Transverse colon (tissue), 4 donors: ENCODE measurements at regions of chr2 and their contacts with region 1.

Region 1: DNA sequence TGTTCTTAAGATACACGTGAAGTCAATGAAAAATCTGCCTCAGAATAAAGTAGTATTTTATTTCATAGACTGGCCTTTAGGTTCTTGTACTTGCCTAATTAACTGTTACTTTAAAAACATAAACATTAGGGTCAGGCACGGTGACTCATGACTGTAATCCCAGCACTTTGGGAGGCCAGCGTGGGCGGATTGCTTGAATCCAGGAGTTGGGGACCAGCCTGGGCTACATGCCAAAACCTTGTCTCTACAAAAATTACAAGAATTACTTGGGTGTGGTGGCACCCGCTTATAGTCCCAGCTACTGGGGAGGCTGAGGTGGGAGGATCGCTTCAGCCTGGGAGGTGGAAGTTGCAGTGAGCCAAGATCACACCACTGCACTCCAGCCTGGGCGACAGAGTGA is 16.0 kb upstream of the SNORC start:
- DNase-seq: peak; percentile 41
- H3K4me3 ChIP-seq: no peak overlapping the region
- H3K27ac ChIP-seq: peak overlapping the region in 2 of 4 donors; percentile 5 to 43
- H3K4me1 ChIP-seq: peaks cover 0 to 29% (median 16%) of the 10 kb centered on the region in 4 donors
- H3K27me3 ChIP-seq: no peaks in the 10 kb centered on the region
- CTCF ChIP-seq: no peak
- EP300 ChIP-seq: no peak
- POLR2A ChIP-seq: no peak

Region 2: GRCh38 chr2:233026192-233026813 is 172.2 kb after region 1 on chr2:
- in situ Hi-C with region 1: loop called in 1 of 4 experiments (anchors 25 kb)
- intact Hi-C with region 1: no loop called
- DNase-seq: no peak
- H3K4me3 ChIP-seq: no peak overlapping the region
- H3K27ac ChIP-seq: no peak overlapping the region
- H3K4me1 ChIP-seq: no peaks in the 10 kb centered on the region
- H3K27me3 ChIP-seq: no peaks in the 10 kb centered on the region
- CTCF ChIP-seq: no peak
- EP300 ChIP-seq: no peak
- POLR2A ChIP-seq: no peak

Region 3: DNA sequence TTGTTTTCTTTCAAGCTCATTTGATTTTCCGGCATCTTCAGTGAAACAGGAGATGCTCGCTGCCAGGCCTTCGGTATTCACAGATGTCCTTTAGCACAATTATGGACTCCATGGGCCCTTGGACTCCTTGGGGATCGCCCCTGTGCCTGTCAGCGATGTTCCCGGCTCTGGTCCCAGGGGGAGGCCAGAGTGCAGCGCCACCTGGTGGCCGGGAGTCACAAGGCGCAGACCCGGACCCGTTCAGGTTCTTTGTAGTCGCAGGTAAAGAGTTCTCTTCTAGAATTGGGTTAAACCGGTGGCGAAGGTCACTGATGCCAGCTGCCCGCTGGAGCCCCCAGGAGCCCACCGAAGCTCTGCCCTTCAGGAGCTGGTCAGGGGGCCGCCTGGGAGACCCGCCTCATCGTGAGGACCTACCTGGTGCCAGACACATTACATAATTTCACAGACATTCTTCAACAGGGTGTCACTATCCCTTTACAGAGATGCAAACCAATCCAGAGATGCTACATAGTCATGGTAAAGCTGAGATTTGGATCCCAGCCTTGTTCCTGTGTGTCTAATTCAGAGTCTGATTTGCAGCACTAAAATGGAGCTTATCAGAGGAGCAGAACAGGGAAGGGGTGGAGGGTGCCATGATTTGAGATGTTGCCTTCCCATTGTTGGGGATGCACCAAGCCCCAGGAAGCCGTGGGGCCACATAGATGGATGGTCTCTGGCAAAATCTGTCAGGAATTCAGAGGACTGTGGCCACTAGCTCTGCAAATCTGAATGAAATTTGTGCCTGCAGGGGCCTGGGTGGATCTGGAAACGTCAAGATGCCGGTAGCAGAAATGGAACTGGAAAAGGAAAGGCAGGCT is 200.1 kb after region 1 on chr2:
- in situ Hi-C with region 1: loop called in 2 of 4 experiments (anchors 10 to 25 kb)
- intact Hi-C with region 1: no loop called
- DNase-seq: peak; percentile 75
- H3K4me3 ChIP-seq: no peak overlapping the region
- H3K27ac ChIP-seq: no peak overlapping the region
- H3K4me1 ChIP-seq: peaks cover 0 to 6% (median 3%) of the 10 kb centered on the region in 4 donors
- H3K27me3 ChIP-seq: no peaks in the 10 kb centered on the region
- CTCF ChIP-seq: peak; percentile 88 to 94 (median 91)
- EP300 ChIP-seq: no peak
- POLR2A ChIP-seq: no peak

Region 4: DNA sequence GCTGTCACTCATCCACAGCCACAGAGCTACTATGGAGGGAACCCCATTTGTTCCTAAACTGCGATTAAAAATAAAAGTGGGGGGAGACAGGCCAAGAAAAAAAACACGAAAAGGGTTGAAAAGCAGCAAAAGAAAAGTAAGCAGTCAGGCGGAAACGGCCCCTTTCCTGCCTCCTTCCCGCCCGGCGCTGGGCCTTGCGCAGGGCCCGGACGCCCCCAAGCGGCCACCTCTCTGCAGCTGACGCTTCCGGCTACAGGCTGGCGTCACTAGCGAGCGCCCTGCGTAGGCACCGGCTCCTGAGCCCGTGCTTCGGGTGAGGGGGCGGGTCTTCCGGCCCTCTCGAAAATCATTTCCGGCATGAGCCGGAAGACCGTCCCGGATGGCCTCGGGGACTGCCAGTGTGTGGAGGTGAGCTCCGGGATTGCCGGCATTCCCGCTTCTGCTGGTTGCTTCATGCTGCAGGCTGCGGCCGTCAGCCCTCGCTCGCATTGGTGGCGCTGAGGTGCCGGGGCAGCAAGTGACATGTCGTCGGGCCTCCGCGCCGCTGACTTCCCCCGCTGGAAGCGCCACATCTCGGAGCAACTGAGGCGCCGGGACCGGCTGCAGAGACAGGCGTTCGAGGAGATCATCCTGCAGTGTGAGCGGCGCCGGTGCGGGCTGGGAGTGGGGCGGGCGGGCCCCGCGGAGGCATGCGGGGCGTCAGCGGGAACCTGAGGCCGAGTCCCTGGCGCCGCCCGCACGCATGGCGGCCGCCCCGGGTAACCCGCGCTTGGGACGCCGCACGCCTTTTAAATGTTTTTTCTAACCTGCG is 397.4 kb after region 1 on chr2 and contains the start of gene ATG16L1:
- in situ Hi-C with region 1: loop called in 3 of 4 experiments (anchors 25 kb)
- intact Hi-C with region 1: loop called (anchors 10 kb)
- DNase-seq: peak; percentile 97
- H3K4me3 ChIP-seq: peak within 1 kb of the TSS; percentile 85 to 97 (median 94)
- H3K27ac ChIP-seq: peak within 1 kb of the TSS; percentile 91 to 98 (median 93)
- H3K4me1 ChIP-seq: peaks cover 4 to 40% (median 16%) of the 10 kb centered on the region in 4 donors
- H3K27me3 ChIP-seq: no peaks in the 10 kb centered on the region
- CTCF ChIP-seq: peak; percentile 84 to 97 (median 91)
- EP300 ChIP-seq: peak; percentile 61
- POLR2A ChIP-seq: peak; percentile 87
- total RNA-seq, gene ATG16L1: 10.1 to 101 (median 50.3) TPM